ENCODE measurements at regions of chr6 and their contacts with region 1.

Region 1: GRCh38 chr6:136880748-136881460 is 41.2 kb upstream of the SLC35D3 start:
- DNase-seq: no peak
- ATAC-seq: no peak
- H3K4me3 ChIP-seq: no peak overlapping the region
- H3K4me3 Mint-ChIP-seq: no peak overlapping the region
- H3K27ac ChIP-seq: no peak overlapping the region
- H3K27ac Mint-ChIP-seq: no peak overlapping the region
- H3K4me1 ChIP-seq: no peaks in the 10 kb centered on the region
- H3K4me1 Mint-ChIP-seq: no peaks in the 10 kb centered on the region
- H3K27me3 ChIP-seq: no peaks in the 10 kb centered on the region
- H3K27me3 Mint-ChIP-seq: no peaks in the 10 kb centered on the region
- CTCF ChIP-seq: no peak

Region 2: DNA sequence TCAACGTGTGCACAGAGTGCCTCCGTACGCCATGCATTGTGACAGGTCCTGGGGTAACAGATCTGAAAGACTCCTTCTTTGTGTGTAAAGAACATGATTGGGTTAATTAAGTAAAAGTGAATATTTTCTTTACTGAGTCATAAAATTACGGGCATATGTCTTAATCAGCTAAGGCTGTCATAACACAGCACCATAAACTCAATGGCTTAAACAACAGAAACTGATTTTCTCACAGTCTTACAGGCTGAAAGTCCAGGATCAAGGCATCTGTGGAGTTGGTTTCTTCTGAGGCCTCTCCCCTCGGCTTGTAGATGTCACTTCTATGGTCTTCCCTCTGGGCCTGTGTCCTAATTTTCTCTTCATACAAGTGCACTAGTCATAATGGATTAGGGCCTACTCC is 807.7 kb before region 1 on chr6:
- CTCF ChIA-PET with region 1: no interaction called
- POLR2A ChIA-PET with region 1: no interaction called
- intact Hi-C with region 1: loop called in 1 of 2 experiments (anchors 5 kb)
- DNase-seq: no peak
- ATAC-seq: no peak
- H3K4me3 ChIP-seq: no peak overlapping the region
- H3K4me3 Mint-ChIP-seq: no peak overlapping the region
- H3K27ac ChIP-seq: no peak overlapping the region
- H3K27ac Mint-ChIP-seq: no peak overlapping the region
- H3K4me1 ChIP-seq: no peaks in the 10 kb centered on the region
- H3K4me1 Mint-ChIP-seq: no peaks in the 10 kb centered on the region
- H3K27me3 ChIP-seq: no peaks in the 10 kb centered on the region
- H3K27me3 Mint-ChIP-seq: peaks cover 5% of the 10 kb centered on the region
- CTCF ChIP-seq: no peak

Region 3: GRCh38 chr6:136831873-136832562 is 48.9 kb before region 1 on chr6:
- CTCF ChIA-PET with region 1: no interaction called
- POLR2A ChIA-PET with region 1: no interaction called
- intact Hi-C with region 1: no loop called
- DNase-seq: no peak
- ATAC-seq: no peak
- H3K4me3 ChIP-seq: no peak overlapping the region
- H3K4me3 Mint-ChIP-seq: no peak overlapping the region
- H3K27ac ChIP-seq: no peak overlapping the region
- H3K27ac Mint-ChIP-seq: no peak overlapping the region
- H3K4me1 ChIP-seq: no peaks in the 10 kb centered on the region
- H3K4me1 Mint-ChIP-seq: peaks cover 2% of the 10 kb centered on the region
- H3K27me3 ChIP-seq: no peaks in the 10 kb centered on the region
- H3K27me3 Mint-ChIP-seq: no peaks in the 10 kb centered on the region
- CTCF ChIP-seq: no peak

Measured in CD8-positive, alpha-beta T cell (primary cell).